ENCODE measurements at regions of chr14 and their contacts with region 1.

Region 1: GRCh38 chr14:54773171-54773975 is 129.3 kb downstream of the GCH1 start:
- DNase-seq: peak; percentile 91
- H3K4me3 ChIP-seq: peak overlapping the region in 1 of 2 experiments; percentile 34; a peak in 1 of 4 replicates
- H3K27ac ChIP-seq: peak overlapping the region; percentile 91 to 97
- H3K4me1 ChIP-seq: peaks cover 17 to 50% of the 10 kb centered on the region in 2 experiments
- H3K27me3 ChIP-seq: no peaks in the 10 kb centered on the region
- CTCF ChIP-seq: peak; percentile 73
- EP300 ChIP-seq: peak; percentile 28 to 93; a peak in 3 of 4 replicates
- RAD21 ChIP-seq: peak; percentile 83

Region 2: DNA sequence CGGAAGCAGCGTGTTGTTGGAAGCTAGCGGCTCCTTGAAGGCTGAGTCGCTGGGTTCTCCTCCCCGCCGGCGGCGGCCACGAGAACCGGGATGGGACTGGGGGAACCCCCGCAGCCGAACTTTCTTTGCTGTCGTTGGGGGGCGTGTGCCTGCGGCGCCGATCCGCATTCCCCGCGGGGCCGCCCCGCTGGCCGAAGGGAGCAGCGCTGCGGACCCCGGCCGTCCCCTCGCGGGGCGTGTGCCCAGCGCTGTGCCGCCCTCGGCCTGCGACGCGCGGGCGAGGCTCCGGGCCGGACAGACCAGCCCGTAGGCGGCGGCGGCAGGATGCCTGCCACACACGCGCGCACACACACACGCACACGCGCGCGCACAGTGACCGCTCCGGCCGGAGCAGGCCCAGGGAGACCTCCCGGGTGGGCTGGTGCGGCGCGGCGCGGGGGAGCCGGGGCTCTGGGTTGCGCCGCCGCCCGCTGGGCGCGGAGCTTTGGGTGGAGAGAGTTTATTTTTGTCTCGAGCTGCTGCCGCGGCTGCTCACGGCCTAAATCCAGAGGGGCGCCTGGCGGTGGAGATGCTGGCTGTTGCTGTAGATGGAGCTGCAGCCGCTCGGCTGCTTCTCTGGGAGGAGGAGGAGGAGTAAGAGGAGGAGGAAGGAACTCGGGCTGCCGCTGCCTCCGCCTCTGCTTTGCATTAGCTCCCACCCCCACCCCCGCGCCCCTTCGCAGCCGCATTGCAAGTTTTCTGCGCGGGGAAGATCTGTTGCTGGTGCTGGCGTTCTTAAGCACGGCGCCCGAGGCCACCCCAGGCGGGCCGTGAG is 206.8 kb before region 1 on chr14 and contains the start of gene SAMD4A:
- CTCF ChIA-PET with region 1: interaction called, 171 read pairs
- POLR2A ChIA-PET with region 1: interaction called, 14 read pairs
- DNase-seq: peak; percentile 77
- H3K4me3 ChIP-seq: peak within 1 kb of the TSS; percentile 70 to 73
- H3K27ac ChIP-seq: peak within 1 kb of the TSS; percentile 82 to 93
- H3K4me1 ChIP-seq: peaks cover 22 to 28% of the 10 kb centered on the region in 2 experiments
- H3K27me3 ChIP-seq: no peaks in the 10 kb centered on the region
- CTCF ChIP-seq: peak; percentile 42
- EP300 ChIP-seq: no peak
- RAD21 ChIP-seq: peak; percentile 24; the same call in 1 of the 2 replicates
- polyA plus RNA-seq, gene SAMD4A: 5.0 and 5.9 TPM in 2 replicates

Region 3: DNA sequence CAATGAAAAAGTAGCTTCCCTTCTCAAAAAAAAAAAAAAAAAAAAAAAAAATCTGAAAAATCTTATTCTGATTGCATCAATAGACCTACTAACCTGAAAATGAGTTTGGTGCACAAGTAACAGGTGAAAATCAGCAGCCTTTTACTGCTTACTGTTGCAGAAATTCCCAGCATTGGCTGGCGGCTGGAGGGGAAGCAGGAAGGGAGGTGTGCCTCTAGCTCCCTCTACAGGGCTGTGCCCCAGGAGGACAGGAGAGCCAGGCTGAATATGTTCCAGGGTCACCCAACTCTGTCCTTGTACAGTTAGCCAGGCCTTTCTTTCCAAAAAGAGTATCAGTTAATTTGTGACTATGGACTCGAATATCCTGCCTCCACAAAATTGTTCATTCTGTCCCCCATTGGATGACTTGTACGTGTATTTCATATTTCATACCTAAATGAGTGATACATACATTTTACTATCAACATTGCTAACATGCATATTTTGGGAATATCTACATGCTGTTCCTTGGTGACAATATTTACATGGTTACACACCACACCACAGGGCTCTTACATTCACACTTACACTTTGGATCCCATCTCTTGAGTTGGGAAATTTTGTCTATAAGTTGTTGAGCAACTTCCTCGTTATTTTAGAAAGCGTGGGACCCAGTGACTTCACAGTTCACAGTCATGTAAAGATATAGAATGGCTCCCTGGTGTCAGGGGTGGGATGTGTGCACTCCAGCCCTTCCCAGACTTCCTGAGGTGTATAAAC is 81.7 kb before region 1 on chr14:
- CTCF ChIA-PET with region 1: interaction called, 17 read pairs
- POLR2A ChIA-PET with region 1: no interaction called
- DNase-seq: peak; percentile 62
- H3K4me3 ChIP-seq: no peak overlapping the region
- H3K27ac ChIP-seq: no peak overlapping the region
- H3K4me1 ChIP-seq: peaks cover 5 to 8% of the 10 kb centered on the region in 2 experiments; a peak in 2 of 4 replicates
- H3K27me3 ChIP-seq: no peaks in the 10 kb centered on the region
- CTCF ChIP-seq: peak; percentile 85
- EP300 ChIP-seq: no peak
- RAD21 ChIP-seq: peak; percentile 85

Region 4: DNA sequence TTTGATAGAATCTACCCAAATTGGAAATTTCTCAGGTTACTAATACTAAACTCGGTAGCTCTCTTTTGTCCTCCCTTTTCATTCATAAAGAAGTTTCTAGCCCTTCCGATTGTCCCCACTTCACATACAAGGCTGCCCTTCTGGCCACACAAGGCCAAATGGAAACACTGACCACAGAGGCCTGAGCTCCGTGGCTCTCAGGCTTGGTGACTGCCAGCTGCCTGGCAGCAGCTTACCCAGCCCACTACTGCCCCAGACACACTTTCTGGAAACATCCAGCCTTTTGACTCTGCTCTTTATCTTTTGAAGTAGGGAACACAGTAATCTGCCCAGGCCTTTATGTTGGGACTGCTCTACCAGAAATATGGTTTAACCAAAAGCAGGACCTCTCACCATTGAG is 37.9 kb before region 1 on chr14:
- CTCF ChIA-PET with region 1: interaction called, 10 read pairs
- POLR2A ChIA-PET with region 1: no interaction called
- DNase-seq: no peak
- H3K4me3 ChIP-seq: no peak overlapping the region
- H3K27ac ChIP-seq: no peak overlapping the region
- H3K4me1 ChIP-seq: peaks cover under 1 to 4% of the 10 kb centered on the region in 2 experiments; a peak in 3 of 4 replicates
- H3K27me3 ChIP-seq: no peaks in the 10 kb centered on the region
- CTCF ChIP-seq: no peak
- EP300 ChIP-seq: no peak
- RAD21 ChIP-seq: no peak

Region 5: DNA sequence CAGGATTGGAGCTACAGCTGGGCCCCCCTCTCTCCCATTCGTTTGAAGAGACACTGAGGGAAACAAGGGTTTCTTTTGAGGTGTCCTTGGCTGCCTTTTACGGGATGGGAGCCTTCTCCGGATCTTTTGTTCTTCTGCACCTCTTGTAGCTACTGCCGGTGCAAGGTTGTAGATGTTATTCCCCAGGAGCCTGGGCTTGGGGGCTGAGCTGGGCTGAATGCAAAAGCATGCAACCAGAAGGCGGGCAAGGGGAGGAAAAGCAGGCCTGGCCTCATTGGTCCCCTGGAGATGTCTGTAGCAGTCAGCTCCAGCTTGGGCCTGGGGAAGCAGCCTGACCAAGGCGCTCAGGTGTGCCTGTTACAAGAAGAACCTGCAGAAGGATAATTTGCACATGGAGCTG is 18.9 kb after region 1 on chr14:
- CTCF ChIA-PET with region 1: interaction called, 89 read pairs
- POLR2A ChIA-PET with region 1: no interaction called
- DNase-seq: no peak
- H3K4me3 ChIP-seq: no peak overlapping the region
- H3K27ac ChIP-seq: no peak overlapping the region
- H3K4me1 ChIP-seq: peaks cover 3 to 9% of the 10 kb centered on the region in 2 experiments; a peak in 3 of 4 replicates
- H3K27me3 ChIP-seq: no peaks in the 10 kb centered on the region
- CTCF ChIP-seq: no peak
- EP300 ChIP-seq: no peak
- RAD21 ChIP-seq: no peak